ENCODE measurements at regions of chr15 and their contacts with region 1.

Region 1: DNA sequence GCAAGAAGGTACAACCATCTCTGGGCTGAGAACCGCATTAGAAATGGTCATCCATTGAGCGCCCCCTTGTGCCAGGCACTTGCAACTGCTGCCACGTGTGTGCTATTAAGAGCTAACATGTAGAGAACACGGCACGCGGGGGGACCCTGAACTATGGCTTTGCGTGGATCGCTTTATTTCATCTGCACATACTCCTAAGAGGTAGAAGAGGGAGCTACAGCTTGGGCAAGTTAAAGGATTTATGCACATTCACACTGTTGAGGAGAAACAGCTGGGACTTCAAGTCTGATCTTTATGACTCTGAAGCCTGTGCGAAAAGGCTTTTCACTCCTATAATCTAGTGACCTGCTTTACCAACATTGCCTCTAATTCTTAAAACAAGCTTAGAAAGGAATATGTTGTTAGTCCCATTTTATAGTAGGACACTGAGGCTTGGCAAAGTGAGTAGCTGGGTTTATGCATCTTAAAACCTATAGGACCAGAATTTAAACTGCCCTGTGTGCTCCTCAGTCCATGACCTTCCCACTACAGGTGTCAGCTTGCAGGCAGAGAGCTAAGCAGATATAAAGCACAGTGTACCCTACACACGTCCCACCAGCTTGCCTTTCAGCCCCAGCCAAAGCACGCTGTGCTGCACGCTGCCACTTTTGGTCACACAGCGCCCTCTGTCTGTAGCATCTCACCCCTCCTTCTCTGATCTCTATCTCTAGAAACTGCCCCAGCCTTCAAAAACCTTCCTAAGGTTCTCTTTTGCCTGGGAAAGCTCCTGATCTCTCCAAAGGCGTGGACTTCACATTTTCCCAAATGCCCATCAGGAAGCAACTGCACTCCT is 57.8 kb downstream of the STARD5 start:
- DNase-seq: peak; percentile 91
- H3K4me3 Mint-ChIP-seq: peak overlapping the region; percentile 27
- H3K27ac Mint-ChIP-seq: peak overlapping the region; percentile 47
- H3K4me1 Mint-ChIP-seq: peaks cover 40% of the 10 kb centered on the region
- H3K27me3 Mint-ChIP-seq: peaks cover 24% of the 10 kb centered on the region

Region 2: GRCh38 chr15:80977627-80978036 is 288.5 kb before region 1 on chr15:
- CTCF ChIA-PET with region 1: interaction called, 35 read pairs
- DNase-seq: peak; percentile 59
- H3K4me3 Mint-ChIP-seq: no peak overlapping the region
- H3K27ac Mint-ChIP-seq: no peak overlapping the region
- H3K4me1 Mint-ChIP-seq: peaks cover 46% of the 10 kb centered on the region
- H3K27me3 Mint-ChIP-seq: no peaks in the 10 kb centered on the region

Region 3: DNA sequence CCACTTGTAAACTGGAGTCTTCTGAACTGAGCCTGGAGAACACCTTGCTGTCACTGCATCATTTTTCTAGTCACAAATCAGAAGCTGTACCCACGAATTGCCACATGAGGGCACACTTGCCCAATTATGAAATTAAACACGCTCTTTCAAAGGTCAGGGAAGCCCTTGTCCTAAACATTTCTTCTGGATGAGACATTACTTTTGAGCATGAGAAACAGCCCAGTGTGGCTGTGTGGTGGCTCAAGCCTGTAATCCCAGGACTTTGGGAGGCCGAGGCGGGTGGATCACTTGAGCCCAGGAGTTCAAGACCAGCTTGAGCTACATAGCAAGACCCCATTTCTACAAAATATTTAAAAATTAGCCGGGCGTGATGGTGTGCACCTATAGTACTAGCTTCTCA is 159.6 kb before region 1 on chr15:
- CTCF ChIA-PET with region 1: interaction called, 220 read pairs
- DNase-seq: peak; percentile 57
- H3K4me3 Mint-ChIP-seq: no peak overlapping the region
- H3K27ac Mint-ChIP-seq: no peak overlapping the region
- H3K4me1 Mint-ChIP-seq: peaks cover 3% of the 10 kb centered on the region
- H3K27me3 Mint-ChIP-seq: peaks cover 63% of the 10 kb centered on the region

Region 4: DNA sequence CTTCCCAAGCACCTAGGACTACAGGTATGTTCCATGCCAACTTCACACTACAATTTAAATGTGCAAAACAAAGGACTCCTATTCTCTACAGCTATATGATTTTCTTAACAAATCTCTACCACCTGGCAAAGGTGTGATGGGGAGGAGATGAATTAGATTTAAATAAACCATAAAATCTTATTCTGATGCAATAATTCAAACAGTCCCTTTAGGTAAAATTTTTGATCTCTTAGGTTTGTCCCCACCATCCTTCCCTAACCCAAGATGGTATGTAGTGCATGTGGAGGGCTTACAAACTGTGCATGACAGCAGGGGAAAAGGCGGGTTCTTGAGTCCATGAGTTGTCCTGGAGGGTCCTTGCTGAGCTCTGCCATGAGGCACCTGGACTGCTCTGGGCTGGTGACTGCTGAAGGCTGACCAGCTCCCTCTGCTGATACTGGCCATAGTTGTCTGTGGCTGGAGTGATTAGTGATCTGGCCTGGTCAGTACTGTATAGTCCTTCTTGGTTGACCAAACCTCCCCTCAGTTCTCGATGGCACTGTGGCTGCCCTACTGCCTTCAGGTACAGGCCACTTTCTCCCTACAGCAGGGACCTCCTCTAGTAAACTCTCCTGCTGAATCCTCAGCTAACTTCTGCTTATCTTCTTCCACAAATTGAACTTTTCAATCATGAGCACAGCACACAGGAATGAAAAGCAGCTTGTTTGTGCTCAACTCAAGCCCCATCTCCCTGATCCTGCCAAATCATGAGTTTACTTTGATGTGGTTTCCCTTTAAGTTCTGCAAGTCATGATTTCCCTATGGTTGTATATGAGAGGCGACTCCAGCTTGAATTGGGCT is 102.0 kb before region 1 on chr15:
- CTCF ChIA-PET with region 1: interaction called, 262 read pairs
- DNase-seq: no peak
- H3K4me3 Mint-ChIP-seq: no peak overlapping the region
- H3K27ac Mint-ChIP-seq: peak overlapping the region; percentile 66
- H3K4me1 Mint-ChIP-seq: peaks cover 74% of the 10 kb centered on the region
- H3K27me3 Mint-ChIP-seq: peaks cover 20% of the 10 kb centered on the region

Region 5: GRCh38 chr15:81244306-81244705 is 21.9 kb before region 1 on chr15:
- CTCF ChIA-PET with region 1: interaction called, 14 read pairs
- DNase-seq: no peak
- H3K4me3 Mint-ChIP-seq: no peak overlapping the region
- H3K27ac Mint-ChIP-seq: no peak overlapping the region
- H3K4me1 Mint-ChIP-seq: no peaks in the 10 kb centered on the region
- H3K27me3 Mint-ChIP-seq: peaks cover 22% of the 10 kb centered on the region

Region 6: GRCh38 chr15:81336568-81336967 is 70.4 kb after region 1 on chr15:
- CTCF ChIA-PET with region 1: interaction called, 102 read pairs
- DNase-seq: peak; percentile 48
- H3K4me3 Mint-ChIP-seq: no peak overlapping the region
- H3K27ac Mint-ChIP-seq: no peak overlapping the region
- H3K4me1 Mint-ChIP-seq: peaks cover 3% of the 10 kb centered on the region
- H3K27me3 Mint-ChIP-seq: peaks cover 4% of the 10 kb centered on the region

Region 7: GRCh38 chr15:81480645-81481053 is 214.5 kb after region 1 on chr15:
- CTCF ChIA-PET with region 1: no interaction called
- DNase-seq: no peak
- H3K4me3 Mint-ChIP-seq: no peak overlapping the region
- H3K27ac Mint-ChIP-seq: no peak overlapping the region
- H3K4me1 Mint-ChIP-seq: no peaks in the 10 kb centered on the region
- H3K27me3 Mint-ChIP-seq: peaks cover 4% of the 10 kb centered on the region